Motor neuron (in vitro differentiated cells): ENCODE measurements at regions of chr18 and their contacts with region 1.

Region 1: GRCh38 chr18:79378542-79379250 is 17.0 kb upstream of the NFATC1 start:
- ATAC-seq: peak; percentile 77 to 93 (median 90)
- H3K4me3 ChIP-seq: no peak overlapping the region
- H3K27ac ChIP-seq: no peak overlapping the region
- H3K4me1 ChIP-seq: peaks cover 0 to 3% of the 10 kb centered on the region in 2 donors

Region 2: GRCh38 chr18:79528846-79529245 is 150.2 kb after region 1 on chr18:
- in situ Hi-C with region 1: loop called in 2 of 9 experiments (anchors 25 kb)
- ATAC-seq: peak; percentile 47 to 85 (median 78)
- H3K4me3 ChIP-seq: no peak overlapping the region
- H3K27ac ChIP-seq: no peak overlapping the region
- H3K4me1 ChIP-seq: peaks cover 0 to 7% of the 10 kb centered on the region in 2 donors

Region 3: DNA sequence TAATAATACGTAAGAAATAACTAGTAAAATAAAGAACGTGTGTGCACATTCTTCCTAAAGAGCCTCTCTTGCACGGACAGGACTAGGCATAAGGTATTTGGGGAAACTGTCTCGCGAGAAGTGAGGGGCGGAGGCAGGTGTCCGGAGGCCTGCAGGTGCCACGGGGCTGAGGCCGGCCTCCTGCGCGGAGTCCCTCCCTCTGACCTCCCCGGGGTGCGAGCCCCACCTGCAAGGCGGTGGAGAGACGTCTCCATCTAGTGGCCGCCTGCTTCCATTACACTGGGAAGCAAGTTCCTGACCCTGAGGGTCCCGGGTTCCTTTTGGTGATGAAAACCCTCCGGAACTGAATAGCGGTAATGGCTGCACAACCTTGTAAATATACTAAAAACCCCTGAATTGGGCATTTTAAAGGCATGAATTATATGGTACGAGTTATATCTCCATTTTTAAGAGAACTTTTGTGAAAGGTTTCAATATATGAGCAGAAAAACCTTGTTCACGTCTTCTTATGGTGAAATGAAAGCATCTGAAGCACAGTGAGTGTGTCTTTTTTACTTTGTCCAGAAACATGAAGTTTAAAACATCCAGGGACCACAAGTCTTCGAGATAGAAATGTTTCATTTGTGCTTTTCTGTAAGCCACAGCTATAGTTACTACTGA is 265.4 kb after region 1 on chr18:
- in situ Hi-C with region 1: loop called in 6 of 9 experiments (anchors 10 to 25 kb)
- ATAC-seq: peak; percentile 66 to 90 (median 82)
- H3K4me3 ChIP-seq: no peak overlapping the region
- H3K27ac ChIP-seq: no peak overlapping the region
- H3K4me1 ChIP-seq: no peaks in the 10 kb centered on the region

Region 4: DNA sequence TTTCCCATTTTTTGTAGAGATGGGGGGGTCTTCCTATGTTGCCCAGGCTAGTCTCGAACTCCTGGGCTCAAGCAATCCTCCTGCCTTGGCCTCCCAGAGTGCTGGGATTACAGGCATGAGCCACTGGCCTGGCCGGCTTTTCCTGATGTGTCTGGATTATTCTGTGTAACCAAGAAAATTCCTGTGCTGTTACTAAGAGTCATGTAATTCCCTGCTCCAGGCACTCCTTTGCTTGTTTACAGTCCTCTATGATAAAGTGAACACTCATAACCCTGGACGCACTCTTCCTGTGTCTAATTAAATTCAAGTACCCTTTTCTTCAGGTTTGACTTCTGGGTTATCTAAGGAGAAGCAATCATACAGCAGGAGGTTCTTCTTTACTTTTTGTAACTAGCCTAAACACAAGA is 286.0 kb after region 1 on chr18:
- in situ Hi-C with region 1: loop called in 2 of 9 experiments (anchors 25 kb)
- ATAC-seq: peak in 1 of 8 experiments; percentile 44
- H3K4me3 ChIP-seq: no peak overlapping the region
- H3K27ac ChIP-seq: no peak overlapping the region
- H3K4me1 ChIP-seq: peaks cover 25 to 26% of the 10 kb centered on the region in 2 donors